T-cell (primary cell): ENCODE measurements at regions of chr11 and their contacts with region 1.

Region 1: DNA sequence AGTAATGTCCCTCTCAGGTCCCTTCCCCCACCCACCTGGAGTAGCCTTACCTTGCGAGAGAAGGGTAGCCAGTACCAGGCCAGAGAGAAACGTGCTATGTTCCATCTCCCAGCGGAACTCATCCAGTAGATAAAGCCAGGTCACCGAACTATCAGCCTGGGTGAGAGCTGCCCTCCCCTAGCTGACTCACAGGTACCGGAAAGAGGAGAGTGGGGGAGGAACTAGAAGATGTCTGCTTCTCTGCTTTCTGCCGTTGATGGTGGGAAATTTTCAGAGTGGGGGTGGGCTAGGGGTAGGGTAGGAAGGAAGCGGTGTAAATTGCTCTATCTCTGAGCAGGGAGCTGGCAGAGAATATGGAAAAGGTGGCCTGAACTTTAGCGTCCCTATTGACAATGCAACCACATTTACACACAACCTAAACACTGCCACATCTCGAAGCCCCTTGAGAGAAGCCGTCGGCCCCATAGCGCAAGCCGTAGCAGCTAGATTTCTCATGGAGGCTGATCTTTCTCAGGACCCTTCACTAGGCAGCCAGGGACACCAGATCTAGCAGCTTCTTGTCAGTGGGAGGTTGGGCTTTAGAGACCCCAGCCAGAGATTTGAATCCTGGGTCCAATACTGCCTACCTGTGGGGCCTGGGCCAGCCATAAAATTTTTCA is at the start of gene CD3D:
- DNase-seq: peak in 34 of 35 experiments; percentile 37 to 84 (median 57)
- ATAC-seq: peak; percentile 41 to 58 (median 58)
- H3K4me3 ChIP-seq: peak within 1 kb of the TSS; percentile 73 to 88
- H3K4me3 Mint-ChIP-seq: peak within 1 kb of the TSS; percentile 85 to 91 (median 87)
- H3K27ac ChIP-seq: peak within 1 kb of the TSS; percentile 97
- H3K27ac Mint-ChIP-seq: peak within 1 kb of the TSS; percentile 98 to 100
- H3K4me1 ChIP-seq: peaks cover 35 to 64% of the 10 kb centered on the region in 2 experiments
- H3K4me1 Mint-ChIP-seq: peaks cover 70 to 90% (median 72%) of the 10 kb centered on the region in 3 donors
- H3K27me3 ChIP-seq: no peaks in the 10 kb centered on the region
- H3K27me3 Mint-ChIP-seq: no peaks in the 10 kb centered on the region
- total RNA-seq, gene CD3D: 290 to 409 (median 361) TPM

Region 2: GRCh38 chr11:117817368-117818040 is 525.1 kb before region 1 on chr11:
- CTCF ChIA-PET with region 1: no interaction called
- POLR2A ChIA-PET with region 1: interaction called in 1 of 2 experiments, 12 read pairs
- DNase-seq: peak; percentile 42 to 92 (median 76)
- ATAC-seq: peak in 3 of 4 experiments; percentile 23 to 43 (median 35)
- H3K4me3 ChIP-seq: no peak overlapping the region
- H3K4me3 Mint-ChIP-seq: peak overlapping the region in 1 of 3 donors; percentile 56
- H3K27ac ChIP-seq: peak overlapping the region; percentile 39
- H3K27ac Mint-ChIP-seq: peak overlapping the region; percentile 47 to 66
- H3K4me1 ChIP-seq: peaks cover 20 to 59% of the 10 kb centered on the region in 2 experiments
- H3K4me1 Mint-ChIP-seq: peaks cover 45 to 58% (median 55%) of the 10 kb centered on the region in 3 donors
- H3K27me3 ChIP-seq: peaks cover 0 to 3% of the 10 kb centered on the region in 2 experiments
- H3K27me3 Mint-ChIP-seq: no peaks in the 10 kb centered on the region

Region 3: DNA sequence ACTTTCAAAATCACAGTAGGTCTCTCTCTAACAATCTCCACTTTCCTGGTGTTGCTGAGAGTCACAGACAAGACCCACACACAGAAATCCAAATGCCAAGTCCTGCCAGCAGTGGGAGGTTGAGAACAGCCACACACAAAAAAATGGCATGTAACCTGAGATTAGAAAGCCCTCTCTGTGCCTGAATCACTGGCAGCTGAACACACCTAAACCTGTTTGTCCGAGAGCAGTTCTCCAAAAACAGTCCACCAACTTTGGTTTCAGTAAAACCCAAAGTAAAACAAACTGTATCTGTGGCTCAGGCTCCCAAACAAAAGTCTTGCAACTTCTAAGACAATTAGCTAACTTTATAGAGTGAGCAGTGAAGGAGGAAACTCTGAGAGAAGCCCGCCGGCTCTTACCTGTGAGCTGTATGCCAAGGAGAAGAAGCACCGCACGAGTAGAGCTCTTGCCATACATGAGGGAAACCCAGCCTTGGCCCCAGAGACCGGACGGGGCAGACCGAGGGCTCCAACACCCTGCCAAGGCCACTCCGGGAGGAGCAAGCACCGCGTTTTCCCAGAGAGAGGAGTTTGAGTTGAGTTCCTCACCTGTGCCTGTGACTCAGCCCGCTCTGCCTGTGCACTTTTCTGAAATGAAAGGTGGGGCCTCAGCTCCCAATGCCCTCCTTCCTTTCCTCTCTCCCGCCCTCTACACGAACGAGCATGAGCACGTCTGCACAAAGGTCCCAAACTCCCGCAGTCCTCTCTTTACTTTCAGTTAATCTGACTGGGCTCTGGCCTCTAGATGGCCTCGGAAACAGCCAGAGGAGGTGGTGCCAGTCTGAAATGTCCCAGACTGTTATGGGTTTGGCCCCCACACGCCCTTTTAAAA is 78.7 kb before region 1 on chr11 and contains the start of gene MPZL2:
- CTCF ChIA-PET with region 1: no interaction called
- POLR2A ChIA-PET with region 1: no interaction called
- DNase-seq: peak in 9 of 35 experiments; percentile 6 to 35 (median 21)
- ATAC-seq: peak; percentile 70 to 80 (median 75)
- H3K4me3 ChIP-seq: peak within 1 kb of the TSS; percentile 27 to 69
- H3K4me3 Mint-ChIP-seq: peak within 1 kb of the TSS; percentile 71 to 85 (median 72)
- H3K27ac ChIP-seq: no peak within 1 kb of the TSS
- H3K27ac Mint-ChIP-seq: peak within 1 kb of the TSS; percentile 76 to 81
- H3K4me1 ChIP-seq: peaks cover 8 to 13% of the 10 kb centered on the region in 2 experiments
- H3K4me1 Mint-ChIP-seq: peaks cover 29 to 46% (median 30%) of the 10 kb centered on the region in 3 donors
- H3K27me3 ChIP-seq: no peaks in the 10 kb centered on the region
- H3K27me3 Mint-ChIP-seq: peaks cover 0 to 3% of the 10 kb centered on the region in 2 donors
- total RNA-seq, gene MPZL2: 0.85 to 5.6 (median 2.0) TPM

Region 4: DNA sequence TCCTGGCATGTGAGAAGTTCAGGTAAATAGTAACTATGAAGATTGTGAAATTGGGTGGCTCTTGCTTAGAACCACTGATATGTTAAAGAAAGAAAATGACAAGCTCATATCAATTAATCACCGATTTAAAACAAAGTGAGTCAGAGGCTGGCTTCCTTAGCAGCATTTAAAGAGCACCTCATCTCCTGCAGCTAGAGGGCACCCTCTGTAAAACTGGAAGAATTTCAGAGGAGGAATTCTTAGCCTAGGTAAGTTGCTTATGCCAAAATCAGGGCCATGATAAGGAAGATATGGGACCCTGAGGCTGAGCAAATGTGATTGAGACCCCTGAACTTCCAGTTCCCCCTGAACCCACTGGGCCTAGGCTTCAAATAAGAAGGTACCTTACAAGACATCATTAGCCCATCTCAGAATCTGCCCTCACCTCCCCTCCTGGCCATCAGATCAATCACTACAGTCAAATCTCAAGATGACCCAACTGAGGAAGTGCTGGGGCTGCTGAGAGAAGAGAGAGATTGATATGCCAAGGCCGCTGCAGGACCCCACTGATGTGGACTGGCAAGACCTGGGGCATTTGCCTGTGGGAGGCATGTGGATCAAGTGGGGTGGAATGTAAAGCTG is 46.7 kb before region 1 on chr11:
- CTCF ChIA-PET with region 1: interaction called, 5 to 11 read pairs
- POLR2A ChIA-PET with region 1: interaction called, 3 to 5 read pairs
- DNase-seq: peak in 27 of 35 experiments; percentile 8 to 76 (median 36)
- ATAC-seq: peak; percentile 79 to 83 (median 80)
- H3K4me3 ChIP-seq: no peak overlapping the region
- H3K4me3 Mint-ChIP-seq: no peak overlapping the region
- H3K27ac ChIP-seq: peak overlapping the region; percentile 14
- H3K27ac Mint-ChIP-seq: peak overlapping the region; percentile 79 to 80
- H3K4me1 ChIP-seq: peaks cover 0 to 8% of the 10 kb centered on the region in 2 experiments
- H3K4me1 Mint-ChIP-seq: peaks cover 21 to 22% (median 22%) of the 10 kb centered on the region in 3 donors
- H3K27me3 ChIP-seq: no peaks in the 10 kb centered on the region
- H3K27me3 Mint-ChIP-seq: no peaks in the 10 kb centered on the region

Region 5: DNA sequence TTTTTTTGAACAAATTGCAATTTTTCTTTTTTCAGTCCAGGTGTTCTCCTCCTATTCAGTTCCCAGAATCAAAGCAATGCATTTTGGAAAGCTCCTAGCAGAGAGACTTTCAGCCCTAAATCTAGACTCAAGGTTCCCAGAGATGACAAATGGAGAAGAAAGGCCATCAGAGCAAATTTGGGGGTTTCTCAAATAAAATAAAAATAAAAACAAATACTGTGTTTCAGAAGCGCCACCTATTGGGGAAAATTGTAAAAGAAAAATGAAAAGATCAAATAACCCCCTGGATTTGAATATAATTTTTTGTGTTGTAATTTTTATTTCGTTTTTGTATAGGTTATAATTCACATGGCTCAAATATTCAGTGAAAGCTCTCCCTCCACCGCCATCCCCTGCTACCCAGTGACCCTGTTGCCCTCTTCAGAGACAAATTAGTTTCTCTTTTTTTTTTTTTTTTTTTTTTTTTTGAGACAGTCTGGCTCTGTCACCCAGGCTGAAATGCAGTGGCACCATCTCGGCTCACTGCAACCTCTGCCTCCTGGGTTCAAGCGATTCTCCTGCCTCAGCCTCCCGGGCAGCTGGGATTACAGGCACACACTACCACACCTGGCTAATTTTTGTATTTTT is 10.6 kb after region 1 on chr11:
- CTCF ChIA-PET with region 1: interaction called, 7 to 10 read pairs
- POLR2A ChIA-PET with region 1: no interaction called
- DNase-seq: peak in 2 of 35 experiments; percentile 27 to 78
- ATAC-seq: peak in 2 of 4 experiments; percentile 20 to 59
- H3K4me3 ChIP-seq: no peak overlapping the region
- H3K4me3 Mint-ChIP-seq: no peak overlapping the region
- H3K27ac ChIP-seq: peak overlapping the region; percentile 61
- H3K27ac Mint-ChIP-seq: peak overlapping the region; percentile 88 to 90
- H3K4me1 ChIP-seq: peaks cover 7 to 11% of the 10 kb centered on the region in 2 experiments
- H3K4me1 Mint-ChIP-seq: peaks cover 32 to 34% (median 33%) of the 10 kb centered on the region in 3 donors
- H3K27me3 ChIP-seq: no peaks in the 10 kb centered on the region
- H3K27me3 Mint-ChIP-seq: no peaks in the 10 kb centered on the region

Region 6: GRCh38 chr11:118401151-118401878 is 58.7 kb after region 1 on chr11 and contains the start of gene ATP5MG:
- CTCF ChIA-PET with region 1: interaction called in 1 of 2 experiments, 10 read pairs
- POLR2A ChIA-PET with region 1: interaction called in 1 of 2 experiments, 3 read pairs
- DNase-seq: peak; percentile 83 to 96 (median 91)
- ATAC-seq: peak; percentile 61 to 83 (median 81)
- H3K4me3 ChIP-seq: peak within 1 kb of the TSS; percentile 94 to 97
- H3K4me3 Mint-ChIP-seq: peak within 1 kb of the TSS; percentile 96 to 97 (median 97)
- H3K27ac ChIP-seq: peak within 1 kb of the TSS; percentile 96
- H3K27ac Mint-ChIP-seq: peak within 1 kb of the TSS; percentile 100
- H3K4me1 ChIP-seq: peaks cover 32 to 33% of the 10 kb centered on the region in 2 experiments
- H3K4me1 Mint-ChIP-seq: peaks cover 58 to 80% (median 74%) of the 10 kb centered on the region in 3 donors
- H3K27me3 ChIP-seq: no peaks in the 10 kb centered on the region
- H3K27me3 Mint-ChIP-seq: no peaks in the 10 kb centered on the region
- total RNA-seq, gene ATP5MG: 140 to 188 (median 172) TPM